ENCODE measurements at regions of chr17 and their contacts with region 1.

Region 1: GRCh38 chr17:51672065-51672464 is 411.7 kb downstream of the UTP18 start:
- DNase-seq: no peak
- H3K4me3 ChIP-seq: no peak overlapping the region
- H3K27ac ChIP-seq: no peak overlapping the region
- H3K4me1 ChIP-seq: no peaks in the 10 kb centered on the region
- H3K27me3 ChIP-seq: no peaks in the 10 kb centered on the region
- CTCF ChIP-seq: no peak
- EP300 ChIP-seq: no peak
- POLR2A ChIP-seq: no peak

Region 2: DNA sequence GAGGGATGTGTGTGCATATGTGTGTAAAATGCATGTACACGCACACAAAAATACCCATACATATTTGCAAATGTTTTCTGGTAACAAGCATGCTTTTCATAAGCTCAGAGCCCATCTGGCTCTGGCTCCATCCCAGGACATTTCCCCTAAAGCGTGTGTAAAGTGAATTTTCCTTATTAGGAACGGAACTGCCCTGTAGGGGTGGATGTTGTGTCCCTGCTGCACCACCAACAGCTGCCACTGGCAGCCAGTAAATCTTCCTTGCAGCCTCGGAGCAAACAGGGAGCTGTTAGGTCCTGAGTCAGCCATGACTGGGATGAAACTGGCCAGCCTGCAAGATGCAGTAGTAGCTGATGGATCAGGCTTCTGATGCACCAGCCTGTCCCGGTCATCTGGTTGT is 18.2 kb before region 1 on chr17:
- intact Hi-C with region 1: loop called in 1 of 4 experiments (anchors 2 kb)
- DNase-seq: no peak
- H3K4me3 ChIP-seq: no peak overlapping the region
- H3K27ac ChIP-seq: no peak overlapping the region
- H3K4me1 ChIP-seq: peaks cover 3% of the 10 kb centered on the region
- H3K27me3 ChIP-seq: no peaks in the 10 kb centered on the region
- CTCF ChIP-seq: no peak
- EP300 ChIP-seq: no peak
- POLR2A ChIP-seq: no peak

Measured in ovary (tissue), 10 donors.